IMR-90 (cell line): ENCODE measurements at regions of chr6 and their contacts with region 1.

Region 1: GRCh38 chr6:155782320-155782731 is 326.7 kb upstream of the NOX3 start:
- DNase-seq: peak; percentile 99
- ATAC-seq: peak; percentile 85
- H3K4me3 ChIP-seq: no peak overlapping the region
- H3K27ac ChIP-seq: peak overlapping the region; percentile 88
- H3K4me1 ChIP-seq: peaks cover 18% of the 10 kb centered on the region
- H3K27me3 ChIP-seq: no peaks in the 10 kb centered on the region
- CTCF ChIP-seq: no peak
- POLR2A ChIP-seq: peak; percentile 75
- RAD21 ChIP-seq: peak; percentile 18; the same call in 1 of the 2 replicates

Region 2: GRCh38 chr6:155530219-155530834 is 252.0 kb before region 1 on chr6:
- CTCF ChIA-PET with region 1: no interaction called
- POLR2A ChIA-PET with region 1: no interaction called
- dilution Hi-C with region 1: no loop called
- in situ Hi-C with region 1: no loop called
- intact Hi-C with region 1: loop called (anchors 1 kb)
- DNase-seq: peak; percentile 60
- ATAC-seq: peak; percentile 54
- H3K4me3 ChIP-seq: no peak overlapping the region
- H3K27ac ChIP-seq: peak overlapping the region; percentile 50; the same call in 1 of the 2 replicates
- H3K4me1 ChIP-seq: 0 out of 2 replicates have a peak, but pooled peaks cover 2% of the 10 kb centered on the region
- H3K27me3 ChIP-seq: no peaks in the 10 kb centered on the region
- CTCF ChIP-seq: peak; percentile 71
- POLR2A ChIP-seq: no peak
- RAD21 ChIP-seq: peak; percentile 81